AG04449 (cell line): ENCODE measurements at regions of chr15 and their contacts with region 1.

Region 1: DNA sequence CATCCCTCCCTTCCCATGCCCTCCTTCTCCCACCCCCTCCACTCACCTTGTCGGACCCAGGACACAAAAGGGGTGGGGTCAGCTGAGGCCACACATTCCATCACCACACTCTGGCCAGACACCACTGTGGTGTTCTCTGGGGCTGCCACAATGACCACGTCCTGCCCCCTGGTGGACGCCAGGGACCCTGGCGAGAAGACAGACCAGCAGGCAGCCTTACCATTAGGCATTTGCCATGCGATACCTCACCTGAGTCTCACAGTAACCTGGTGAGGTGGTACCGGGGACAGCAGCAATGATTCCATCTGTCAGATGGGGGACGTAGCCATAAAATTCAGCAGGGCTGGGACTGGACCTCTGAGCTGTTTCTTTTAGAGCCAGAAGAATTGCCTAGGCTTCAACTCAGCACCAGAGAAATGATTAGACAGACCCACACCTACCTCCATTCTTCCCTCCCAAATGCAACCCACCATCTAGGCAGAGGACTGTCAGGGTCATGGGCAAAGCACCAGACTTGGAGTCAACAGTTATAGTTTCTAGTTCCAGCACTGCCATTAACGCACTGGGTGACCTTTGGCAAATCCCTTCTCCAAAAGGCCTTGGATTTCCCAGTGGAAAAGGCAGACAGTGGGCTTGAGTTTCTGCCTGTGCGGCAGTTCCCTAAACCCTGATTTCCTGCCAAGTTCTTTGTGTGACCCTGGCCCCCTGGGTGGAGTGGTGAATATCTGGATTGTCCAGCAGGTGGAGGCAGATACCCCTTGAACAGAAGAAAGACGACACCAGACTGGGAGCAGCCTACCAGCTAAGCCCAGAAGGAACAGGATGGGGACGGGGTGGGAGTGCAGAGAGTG is 21.8 kb downstream of the IGDCC4 start:
- DNase-seq: no peak
- H3K4me3 ChIP-seq: no peak overlapping the region
- CTCF ChIP-seq: peak; percentile 92

Region 2: GRCh38 chr15:65312400-65312916 is 88.5 kb before region 1 on chr15:
- CTCF ChIA-PET with region 1: interaction called, 652 read pairs
- POLR2A ChIA-PET with region 1: no interaction called
- DNase-seq: no peak
- H3K4me3 ChIP-seq: no peak overlapping the region
- CTCF ChIP-seq: no peak

Region 3: DNA sequence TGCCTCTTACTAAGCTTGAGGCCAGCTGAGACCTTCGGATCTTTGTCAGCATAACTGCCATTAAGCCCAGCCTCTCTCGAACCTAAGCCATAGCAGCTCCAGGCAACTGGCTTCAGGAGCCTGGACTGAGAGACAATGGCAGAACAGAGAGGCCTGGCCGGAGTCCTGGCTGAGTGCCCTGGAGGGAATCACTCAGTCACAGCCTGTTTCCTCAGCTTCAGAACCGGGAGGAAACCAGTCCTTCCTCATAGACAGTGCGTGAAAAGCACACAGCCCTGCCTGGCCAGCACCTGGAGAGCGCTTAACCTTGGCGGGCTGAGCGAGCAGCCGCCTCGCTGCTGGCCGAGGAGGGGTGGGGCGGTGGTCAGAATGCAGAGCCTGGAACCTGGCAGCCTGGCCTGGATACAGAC is 74.9 kb before region 1 on chr15:
- CTCF ChIA-PET with region 1: interaction called, 652 read pairs
- POLR2A ChIA-PET with region 1: no interaction called
- DNase-seq: no peak
- H3K4me3 ChIP-seq: no peak overlapping the region
- CTCF ChIP-seq: no peak

Region 4: DNA sequence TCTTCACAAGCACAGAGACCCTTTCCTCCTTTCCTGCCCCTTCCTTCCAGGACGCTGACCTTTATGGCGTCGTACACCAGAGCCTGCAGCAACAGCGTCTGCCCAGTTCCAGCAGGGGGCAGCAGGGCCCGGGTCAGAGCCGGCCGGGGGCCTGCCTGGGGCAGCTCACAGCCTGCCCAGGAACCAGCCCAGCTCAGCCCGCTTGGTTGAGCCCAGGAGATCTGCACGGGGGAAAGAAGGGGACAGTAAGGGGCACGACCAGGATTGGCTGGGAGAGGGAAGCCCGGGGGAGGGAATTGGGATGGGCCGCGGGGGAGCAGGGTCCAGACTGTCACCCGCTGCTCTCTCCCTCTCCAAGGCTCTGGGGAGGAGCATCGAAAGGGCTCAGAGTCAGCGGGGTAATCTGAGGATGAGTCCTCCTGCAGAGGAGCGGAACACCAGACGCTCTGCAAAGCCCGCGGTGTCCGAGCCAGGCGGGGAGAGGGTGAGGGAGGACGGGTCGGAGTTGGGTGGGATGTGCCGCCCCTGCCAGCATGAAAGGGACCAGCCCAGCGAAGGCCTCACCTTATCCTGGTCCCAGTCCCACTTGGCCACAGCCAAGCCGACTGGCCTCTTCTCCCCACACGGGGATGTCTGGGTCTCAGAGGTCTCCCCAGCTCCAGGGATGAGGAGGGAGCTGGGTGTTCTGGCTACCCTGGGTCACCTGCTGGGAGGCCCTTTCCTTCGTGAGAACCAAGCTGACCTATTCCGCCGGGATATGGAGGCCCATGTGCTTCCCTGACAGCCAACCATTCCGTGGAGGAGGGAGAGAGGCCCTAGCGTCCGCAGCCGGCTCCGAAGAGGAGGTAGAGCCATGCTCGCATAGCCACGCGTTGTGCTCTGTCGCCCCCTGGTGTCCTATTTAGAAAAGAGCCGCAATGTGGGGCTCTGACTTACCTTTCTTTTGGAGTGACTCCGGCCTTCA is 15.8 kb before region 1 on chr15:
- CTCF ChIA-PET with region 1: interaction called, 267 read pairs
- POLR2A ChIA-PET with region 1: no interaction called
- DNase-seq: peak; percentile 9
- H3K4me3 ChIP-seq: no peak overlapping the region
- CTCF ChIP-seq: peak; percentile 83

Region 5: DNA sequence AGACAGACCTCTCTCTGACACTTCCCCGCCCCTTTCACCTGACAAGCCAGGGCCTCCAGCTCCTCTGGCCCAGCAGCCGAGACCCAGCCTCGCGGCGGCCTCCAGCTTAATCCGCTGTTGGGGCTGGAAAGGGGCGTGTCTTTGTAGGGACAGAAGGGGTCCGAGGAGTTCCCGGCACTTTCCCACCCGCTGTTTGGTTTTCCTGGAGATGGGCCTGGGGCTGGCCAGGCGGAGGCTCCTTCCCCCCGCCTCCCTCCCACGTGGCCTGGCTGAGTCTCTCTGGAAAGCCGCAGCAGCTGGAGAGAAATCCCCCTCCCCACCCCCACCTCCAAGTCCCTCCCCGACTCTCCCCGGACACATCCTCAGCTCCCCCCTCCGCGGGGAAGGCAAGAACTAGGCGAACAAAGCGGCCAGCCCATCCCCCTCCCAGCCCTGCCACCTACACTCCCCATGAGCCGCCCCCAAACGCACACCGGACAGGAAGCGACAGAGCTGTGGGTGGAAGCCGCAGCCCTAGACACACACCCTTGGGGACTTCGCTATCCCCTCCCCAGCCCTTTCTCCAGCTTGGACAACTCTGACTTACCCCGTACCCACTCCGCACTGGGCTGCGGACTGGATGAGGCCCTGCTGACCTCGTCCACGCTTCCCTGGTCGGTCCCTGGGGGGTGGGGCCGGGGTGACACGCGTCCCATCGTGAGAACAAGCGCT is 20.5 kb after region 1 on chr15:
- CTCF ChIA-PET with region 1: interaction called, 65 read pairs
- POLR2A ChIA-PET with region 1: interaction called, 6 read pairs
- DNase-seq: no peak
- H3K4me3 ChIP-seq: peak overlapping the region; percentile 60
- CTCF ChIP-seq: no peak

Region 6: DNA sequence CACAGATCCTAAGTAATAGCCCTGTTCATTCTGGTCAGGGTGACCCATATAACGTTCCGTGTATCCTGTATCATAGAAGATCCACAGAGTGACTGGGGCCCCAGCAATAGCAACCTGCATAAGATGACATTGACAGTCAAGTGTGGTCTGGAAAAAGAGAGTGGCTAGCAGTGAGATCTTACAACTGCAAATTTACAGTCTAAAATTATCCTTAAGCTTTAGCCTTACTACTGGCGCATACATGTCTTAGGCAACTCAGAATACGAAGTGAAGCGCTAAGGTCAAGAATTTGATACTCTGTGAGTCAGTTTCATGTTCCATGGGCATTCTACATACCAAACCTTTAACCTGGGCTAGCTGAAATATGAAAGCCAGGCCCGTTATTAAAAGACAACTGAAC is 51.0 kb after region 1 on chr15:
- CTCF ChIA-PET with region 1: interaction called, 20 read pairs
- POLR2A ChIA-PET with region 1: no interaction called
- DNase-seq: no peak
- H3K4me3 ChIP-seq: no peak overlapping the region
- CTCF ChIP-seq: no peak

Region 7: DNA sequence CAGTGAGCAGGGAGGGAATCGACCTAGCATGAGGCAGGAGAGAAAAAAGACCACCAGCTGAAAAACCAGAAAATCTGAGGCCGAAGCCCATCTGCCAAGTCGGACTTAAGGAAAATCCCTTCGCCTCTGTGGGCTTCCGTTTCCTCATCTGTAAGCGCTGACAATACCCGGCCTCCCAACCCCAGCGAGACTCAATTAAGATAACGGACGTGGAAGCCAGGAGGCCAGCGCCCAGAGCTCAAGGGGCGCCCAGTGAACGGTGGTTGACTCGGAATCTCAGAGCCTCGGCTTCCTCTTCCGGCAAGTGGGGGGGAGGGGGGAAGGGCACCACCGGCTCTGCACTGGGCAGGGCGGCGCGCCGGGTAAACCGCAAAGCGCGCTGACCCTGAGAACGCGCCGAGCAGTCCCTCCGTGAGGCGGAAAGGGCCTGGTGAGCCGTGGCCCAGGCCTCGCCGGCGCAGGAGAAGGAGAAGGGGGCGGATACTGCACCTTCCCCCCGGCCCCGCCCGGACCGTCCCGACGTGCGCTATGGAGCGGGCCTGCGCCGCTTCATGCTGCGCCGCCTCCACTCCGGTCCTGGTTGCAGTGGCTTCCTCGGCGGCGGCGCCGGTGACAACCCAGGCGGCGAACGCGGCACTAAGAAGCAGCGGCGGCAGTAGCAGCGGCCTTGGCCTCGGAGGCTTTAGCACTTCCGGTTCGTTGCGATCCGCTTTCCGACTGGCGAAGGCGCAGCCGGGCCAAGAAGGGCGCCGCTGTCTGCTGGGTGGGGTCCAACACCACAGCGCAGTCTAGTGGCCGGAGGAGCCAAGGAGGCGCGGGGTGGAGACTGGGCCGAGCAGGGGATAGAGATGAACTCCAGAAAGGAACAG is 116.2 kb after region 1 on chr15 and contains the start of gene DPP8:
- CTCF ChIA-PET with region 1: interaction called, 10 read pairs
- POLR2A ChIA-PET with region 1: no interaction called
- DNase-seq: peak; percentile 44
- H3K4me3 ChIP-seq: peak within 1 kb of the TSS; percentile 97
- CTCF ChIP-seq: peak; percentile 99